Dorsolateral prefrontal cortex (tissue), 120 donors: ENCODE measurements at regions of chr14 and their contacts with region 1.

Region 1: GRCh38 chr14:64338616-64339316 is 44.6 kb upstream of the ESR2 start:
- DNase-seq: peak; percentile 74 to 97 (median 94)
- H3K4me3 ChIP-seq: peak overlapping the region; percentile 58 to 95 (median 83)
- H3K27ac ChIP-seq: peak overlapping the region; percentile 1 to 93 (median 83)
- H3K27me3 ChIP-seq: no peaks in the 10 kb centered on the region
- CTCF ChIP-seq: peak in 3 of 56 donors; percentile 12 to 25 (median 23)

Region 2: GRCh38 chr14:64123241-64123822 is 215.4 kb before region 1 on chr14:
- intact Hi-C with region 1: no loop called
- DNase-seq: no peak
- H3K4me3 ChIP-seq: no peak overlapping the region
- H3K27ac ChIP-seq: no peak overlapping the region
- H3K27me3 ChIP-seq: no peaks in the 10 kb centered on the region
- CTCF ChIP-seq: no peak

Region 3: DNA sequence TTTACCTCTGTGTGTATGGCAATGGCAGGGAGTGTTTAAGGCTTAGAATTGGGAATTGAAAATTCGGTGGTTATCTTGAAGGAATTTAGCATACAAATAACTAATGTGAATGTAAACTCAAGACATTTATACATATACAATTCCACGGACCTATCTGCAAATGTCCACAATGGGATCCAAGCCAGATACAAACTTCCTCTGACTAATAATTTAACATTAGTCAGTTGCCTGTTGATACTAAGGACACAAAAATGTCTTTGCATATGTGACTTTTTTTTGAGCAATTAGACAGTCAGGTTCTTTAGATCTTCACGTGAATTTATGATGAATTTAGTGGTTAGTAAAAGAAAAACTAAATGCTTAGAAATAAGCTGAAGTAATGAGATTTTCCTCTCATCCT is 85.1 kb before region 1 on chr14:
- intact Hi-C with region 1: no loop called
- DNase-seq: no peak
- H3K4me3 ChIP-seq: no peak overlapping the region
- H3K27ac ChIP-seq: no peak overlapping the region
- H3K27me3 ChIP-seq: no peaks in the 10 kb centered on the region
- CTCF ChIP-seq: no peak

Region 4: GRCh38 chr14:64363265-64363846 is 24.6 kb after region 1 on chr14:
- intact Hi-C with region 1: no loop called
- DNase-seq: no peak
- H3K4me3 ChIP-seq: no peak overlapping the region
- H3K27ac ChIP-seq: no peak overlapping the region
- H3K27me3 ChIP-seq: no peaks in the 10 kb centered on the region
- CTCF ChIP-seq: no peak

Region 5: DNA sequence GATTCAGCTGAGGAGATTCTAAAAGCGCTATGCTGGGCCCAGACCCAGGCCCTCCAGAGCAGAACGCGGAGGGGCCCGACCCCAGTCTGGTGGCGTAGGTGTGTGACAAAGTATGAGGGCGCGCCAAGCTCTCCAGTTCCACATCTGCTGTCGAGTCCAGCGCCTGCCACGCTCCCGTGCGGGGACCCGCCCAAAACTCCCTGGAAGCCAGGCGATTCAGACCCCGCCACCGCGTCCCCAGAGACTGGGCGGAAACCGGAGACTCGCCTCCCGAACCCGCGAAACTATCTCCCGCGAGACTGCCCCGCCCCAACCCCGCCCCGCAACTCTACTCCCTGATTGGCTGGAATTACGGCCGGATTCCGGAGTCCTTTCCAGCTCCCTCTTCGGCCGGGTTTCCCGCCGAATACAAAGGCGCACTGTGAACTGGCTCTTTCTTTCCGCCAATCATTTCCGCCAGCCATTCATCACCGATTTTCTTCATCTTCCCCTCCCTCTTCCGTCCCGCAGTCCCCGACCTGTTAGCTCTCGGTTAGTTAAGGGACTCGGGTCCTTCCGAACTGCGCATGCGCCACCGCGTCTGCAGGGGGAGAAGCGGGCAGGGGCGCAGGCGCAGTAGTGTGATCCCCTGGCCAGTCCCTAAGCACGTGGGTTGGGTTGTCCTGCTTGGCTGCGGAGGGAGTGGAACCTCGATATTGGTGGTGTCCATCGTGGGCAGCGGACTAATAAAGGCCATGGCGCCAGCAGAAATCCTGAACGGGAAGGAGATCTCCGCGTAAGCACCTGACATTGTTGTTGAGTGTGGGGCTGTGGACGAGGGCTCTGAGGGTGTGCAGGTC is 49.1 kb after region 1 on chr14 and contains the start of gene MTHFD1:
- intact Hi-C with region 1: loop called (anchors 5 kb)
- DNase-seq: peak; percentile 92 to 98 (median 97)
- H3K4me3 ChIP-seq: peak within 1 kb of the TSS; percentile 55 to 98 (median 86)
- H3K27ac ChIP-seq: peak within 1 kb of the TSS in 56 of 59 donors; percentile 4 to 92 (median 82)
- H3K27me3 ChIP-seq: no peaks in the 10 kb centered on the region
- CTCF ChIP-seq: peak in 13 of 56 donors; percentile 6 to 37 (median 21)
- total RNA-seq, gene MTHFD1: 41.0 to 93.1 (median 63.8) TPM

Region 6: DNA sequence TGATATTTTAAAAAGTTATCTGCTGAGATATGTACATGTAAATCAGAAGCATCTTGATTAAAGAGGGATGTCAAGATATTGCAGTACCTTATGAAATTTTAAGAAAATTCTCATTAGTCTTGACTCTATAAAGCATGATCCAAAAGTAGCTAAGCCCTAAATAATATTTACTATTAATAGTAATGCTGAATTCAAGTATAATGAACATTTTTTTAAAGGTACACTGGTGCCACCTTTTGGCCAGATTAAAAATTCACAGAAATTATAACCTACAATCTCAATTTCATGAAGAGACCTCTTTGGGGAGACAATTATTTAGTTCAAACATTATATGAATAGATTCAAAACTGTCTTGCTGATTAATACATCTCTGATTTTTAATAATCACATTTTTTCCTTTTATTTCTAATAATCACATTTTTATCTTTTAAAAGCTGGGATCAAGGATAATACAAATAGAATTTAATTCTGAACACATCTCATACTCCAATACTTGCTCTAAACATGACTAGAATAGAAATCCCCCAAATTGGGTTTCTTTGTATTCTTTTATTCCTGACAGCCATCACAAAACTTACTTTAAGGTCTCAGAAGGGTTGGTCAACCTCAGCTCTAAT is 140.0 kb after region 1 on chr14:
- intact Hi-C with region 1: loop called (anchors 5 to 10 kb)
- DNase-seq: no peak
- H3K4me3 ChIP-seq: no peak overlapping the region
- H3K27ac ChIP-seq: peak overlapping the region in 3 of 59 donors; percentile 3 to 25 (median 14)
- H3K27me3 ChIP-seq: no peaks in the 10 kb centered on the region
- CTCF ChIP-seq: peak; percentile 22 to 79 (median 60)

Region 7: DNA sequence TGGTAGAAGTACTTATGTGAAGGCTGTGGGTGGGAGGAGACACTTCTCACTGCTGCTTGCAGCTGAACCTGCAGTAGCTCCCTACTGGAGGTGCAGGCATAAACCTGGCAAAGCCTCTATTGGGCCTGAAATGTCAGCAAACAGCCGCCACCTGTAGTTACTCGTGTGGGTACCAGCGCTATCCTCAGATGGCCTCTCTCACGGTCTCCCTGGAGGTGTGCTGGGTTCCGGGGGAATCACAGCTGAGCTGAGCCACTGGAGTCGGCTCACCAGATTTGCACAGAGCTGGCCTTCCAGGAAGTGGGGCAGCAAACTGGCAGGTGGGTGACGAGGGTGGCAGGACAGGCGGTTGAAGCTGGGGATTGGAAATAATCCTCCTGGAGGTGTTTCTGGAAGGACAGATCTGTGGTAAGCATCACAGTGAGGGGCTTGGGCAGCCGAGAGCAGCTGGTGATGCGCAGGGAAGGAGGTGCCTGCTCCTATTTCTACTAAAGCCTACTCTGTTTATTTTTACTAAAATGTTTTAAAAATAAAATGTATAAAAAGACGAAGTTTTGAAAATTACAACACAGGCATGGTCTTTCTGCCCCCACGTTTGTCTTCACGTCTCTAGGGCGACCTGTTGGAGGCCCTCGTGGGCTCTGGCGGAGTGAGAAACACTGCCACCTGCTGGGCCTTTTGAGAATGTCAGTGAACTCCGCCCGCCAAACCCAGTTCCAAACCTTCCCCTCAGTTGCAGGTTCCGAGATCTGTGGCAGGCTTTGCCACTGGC is 297.6 kb after region 1 on chr14:
- intact Hi-C with region 1: loop called in 1 of 2 experiments (anchors 10 kb)
- DNase-seq: peak; percentile 60 to 84 (median 70)
- H3K4me3 ChIP-seq: peak overlapping the region in 26 of 59 donors; percentile 2 to 50 (median 17)
- H3K27ac ChIP-seq: peak overlapping the region in 43 of 59 donors; percentile 2 to 80 (median 46)
- H3K27me3 ChIP-seq: no peaks in the 10 kb centered on the region
- CTCF ChIP-seq: peak; percentile 87 to 100 (median 96)